ENCODE measurements at regions of chr12 and their contacts with region 1.

Region 1: GRCh38 chr12:104720339-104721038 is 237.6 kb downstream of the SLC41A2 start:
- DNase-seq: peak; percentile 67
- H3K4me3 Mint-ChIP-seq: peak overlapping the region; percentile 76
- H3K27ac Mint-ChIP-seq: peak overlapping the region; percentile 94
- H3K4me1 Mint-ChIP-seq: peaks cover 47% of the 10 kb centered on the region
- H3K27me3 Mint-ChIP-seq: no peaks in the 10 kb centered on the region

Region 2: DNA sequence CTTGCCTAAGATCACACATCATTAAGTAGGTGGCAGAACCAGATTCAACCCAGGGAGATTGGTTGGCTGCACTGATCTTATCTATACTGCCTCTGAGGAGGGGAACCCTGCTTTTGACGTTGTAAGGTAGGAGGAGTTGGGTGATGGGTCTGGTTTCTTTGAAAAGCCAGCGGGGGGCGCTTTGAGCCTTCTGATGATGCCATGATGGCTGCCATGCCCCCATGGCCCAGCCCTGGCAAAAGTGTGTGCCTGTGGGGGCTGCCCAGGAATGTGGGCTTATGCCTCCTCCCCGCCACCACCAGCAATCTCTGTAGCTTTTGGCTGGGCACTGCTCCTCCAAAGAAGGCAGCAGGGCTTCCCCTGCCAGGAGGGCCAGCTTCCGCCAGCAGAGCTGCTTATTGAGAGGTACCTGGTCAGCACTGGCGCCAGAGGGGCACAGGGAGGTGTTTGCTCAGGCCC is 13.3 kb after region 1 on chr12:
- intact Hi-C with region 1: loop called (anchors 2 kb)
- DNase-seq: peak; percentile 16
- H3K4me3 Mint-ChIP-seq: no peak overlapping the region
- H3K27ac Mint-ChIP-seq: no peak overlapping the region
- H3K4me1 Mint-ChIP-seq: peaks cover 62% of the 10 kb centered on the region
- H3K27me3 Mint-ChIP-seq: no peaks in the 10 kb centered on the region

Region 3: GRCh38 chr12:104865080-104865479 is 144.6 kb after region 1 on chr12:
- intact Hi-C with region 1: no loop called
- DNase-seq: no peak
- H3K4me3 Mint-ChIP-seq: no peak overlapping the region
- H3K27ac Mint-ChIP-seq: no peak overlapping the region
- H3K4me1 Mint-ChIP-seq: peaks cover 12% of the 10 kb centered on the region
- H3K27me3 Mint-ChIP-seq: peaks cover 15% of the 10 kb centered on the region